CD8-positive, alpha-beta T cell (primary cell): ENCODE measurements at regions of chr7 and their contacts with region 1.

Region 1: GRCh38 chr7:44973610-44974401 is 5.0 kb downstream of the MYO1G start:
- DNase-seq: peak in 8 of 9 experiments; percentile 47 to 72 (median 67)
- ATAC-seq: peak; percentile 19
- H3K4me3 ChIP-seq: no peak overlapping the region
- H3K4me3 Mint-ChIP-seq: no peak overlapping the region
- H3K27ac ChIP-seq: no peak overlapping the region
- H3K27ac Mint-ChIP-seq: peak overlapping the region; percentile 66
- H3K4me1 ChIP-seq: peaks cover 36% of the 10 kb centered on the region
- H3K4me1 Mint-ChIP-seq: peaks cover 44% of the 10 kb centered on the region
- H3K27me3 ChIP-seq: no peaks in the 10 kb centered on the region
- H3K27me3 Mint-ChIP-seq: no peaks in the 10 kb centered on the region
- CTCF ChIP-seq: peak; percentile 59

Region 2: GRCh38 chr7:44685723-44686122 is 288.1 kb before region 1 on chr7:
- CTCF ChIA-PET with region 1: no interaction called
- POLR2A ChIA-PET with region 1: no interaction called
- intact Hi-C with region 1: no loop called
- DNase-seq: no peak
- ATAC-seq: no peak
- H3K4me3 ChIP-seq: no peak overlapping the region
- H3K4me3 Mint-ChIP-seq: no peak overlapping the region
- H3K27ac ChIP-seq: no peak overlapping the region
- H3K27ac Mint-ChIP-seq: peak overlapping the region; percentile 7
- H3K4me1 ChIP-seq: no peaks in the 10 kb centered on the region
- H3K4me1 Mint-ChIP-seq: no peaks in the 10 kb centered on the region
- H3K27me3 ChIP-seq: no peaks in the 10 kb centered on the region
- H3K27me3 Mint-ChIP-seq: no peaks in the 10 kb centered on the region
- CTCF ChIP-seq: no peak

Region 3: DNA sequence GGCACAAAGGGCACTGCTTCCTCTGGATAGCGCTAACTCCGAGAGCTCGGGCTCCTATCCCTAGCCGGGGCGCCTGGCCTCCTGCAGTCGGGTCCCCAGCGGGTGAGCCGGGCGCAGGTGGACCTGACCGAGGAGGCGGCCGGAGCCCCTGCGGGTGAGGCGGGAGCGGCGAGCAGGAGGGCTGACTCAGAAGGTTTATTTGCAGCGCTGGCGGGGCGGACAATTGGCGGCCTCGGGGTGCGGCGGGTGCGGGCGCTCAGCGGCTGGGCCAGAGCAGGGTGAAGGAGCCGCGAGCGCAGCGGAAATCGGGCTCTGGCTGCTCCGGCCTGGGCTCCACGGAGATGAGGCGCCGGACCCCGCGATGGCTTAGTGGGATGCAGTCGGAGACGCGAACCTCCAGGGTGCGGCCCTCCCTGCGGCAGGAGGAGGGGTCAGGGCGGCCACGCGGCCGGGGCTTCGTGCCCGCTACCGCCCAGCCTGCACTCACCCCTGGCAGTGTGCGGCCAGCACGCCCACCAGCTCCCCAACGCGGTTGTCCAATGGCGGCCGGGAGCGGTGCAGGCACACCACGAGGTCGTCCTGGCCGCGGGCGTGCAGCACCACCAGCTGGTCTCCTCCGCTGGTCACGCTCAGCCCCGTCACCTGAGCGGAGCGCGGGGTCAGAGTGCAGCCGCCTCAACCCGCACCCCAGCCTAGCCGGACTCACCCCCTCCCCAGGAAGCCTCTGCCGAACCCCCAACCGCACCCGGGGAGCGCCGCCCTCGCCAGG is 11.1 kb before region 1 on chr7:
- CTCF ChIA-PET with region 1: interaction called, 10 read pairs
- POLR2A ChIA-PET with region 1: interaction called, 4 read pairs
- intact Hi-C with region 1: no loop called
- DNase-seq: peak in 3 of 9 experiments; percentile 23 to 44 (median 42)
- ATAC-seq: no peak
- H3K4me3 ChIP-seq: no peak overlapping the region
- H3K4me3 Mint-ChIP-seq: no peak overlapping the region
- H3K27ac ChIP-seq: no peak overlapping the region
- H3K27ac Mint-ChIP-seq: no peak overlapping the region
- H3K4me1 ChIP-seq: peaks cover 3% of the 10 kb centered on the region
- H3K4me1 Mint-ChIP-seq: peaks cover 17% of the 10 kb centered on the region
- H3K27me3 ChIP-seq: no peaks in the 10 kb centered on the region
- H3K27me3 Mint-ChIP-seq: no peaks in the 10 kb centered on the region
- CTCF ChIP-seq: no peak

Region 4: GRCh38 chr7:45052011-45052410 is 78.2 kb after region 1 on chr7:
- CTCF ChIA-PET with region 1: interaction called, 18 read pairs
- POLR2A ChIA-PET with region 1: no interaction called
- intact Hi-C with region 1: no loop called
- DNase-seq: no peak
- ATAC-seq: no peak
- H3K4me3 ChIP-seq: no peak overlapping the region
- H3K4me3 Mint-ChIP-seq: no peak overlapping the region
- H3K27ac ChIP-seq: no peak overlapping the region
- H3K27ac Mint-ChIP-seq: peak overlapping the region; percentile 73
- H3K4me1 ChIP-seq: no peaks in the 10 kb centered on the region
- H3K4me1 Mint-ChIP-seq: peaks cover 76% of the 10 kb centered on the region
- H3K27me3 ChIP-seq: no peaks in the 10 kb centered on the region
- H3K27me3 Mint-ChIP-seq: no peaks in the 10 kb centered on the region
- CTCF ChIP-seq: no peak